ENCODE measurements at regions of chr7 and their contacts with region 1.

Region 1: GRCh38 chr7:11831736-11832495 is at the start of gene THSD7A:
- DNase-seq: no peak
- H3K4me3 ChIP-seq: peak within 1 kb of the TSS; percentile 61 to 68 (median 62)
- H3K27ac ChIP-seq: peak within 1 kb of the TSS; percentile 55 to 78 (median 63)
- H3K4me1 ChIP-seq: peaks cover 6 to 18% (median 11%) of the 10 kb centered on the region in 4 donors
- H3K27me3 ChIP-seq: no peaks in the 10 kb centered on the region
- CTCF ChIP-seq: peak in 1 of 3 experiments; percentile 30
- EP300 ChIP-seq: no peak
- POLR2A ChIP-seq: no peak
- total RNA-seq, gene THSD7A: 1.2 to 3.8 (median 2.8) TPM

Region 2: GRCh38 chr7:12322284-12322902 is 490.5 kb after region 1 on chr7:
- intact Hi-C with region 1: loop called (anchors 10 kb)
- DNase-seq: no peak
- H3K4me3 ChIP-seq: no peak overlapping the region
- H3K27ac ChIP-seq: no peak overlapping the region
- H3K4me1 ChIP-seq: no peaks in the 10 kb centered on the region
- H3K27me3 ChIP-seq: no peaks in the 10 kb centered on the region
- CTCF ChIP-seq: peak; percentile 43 to 60 (median 57)
- EP300 ChIP-seq: no peak
- POLR2A ChIP-seq: no peak

Measured in esophagus muscularis mucosa (tissue), 4 donors.